K562 (cell line): ENCODE measurements at regions of chr11 and their contacts with region 1.

Region 1: DNA sequence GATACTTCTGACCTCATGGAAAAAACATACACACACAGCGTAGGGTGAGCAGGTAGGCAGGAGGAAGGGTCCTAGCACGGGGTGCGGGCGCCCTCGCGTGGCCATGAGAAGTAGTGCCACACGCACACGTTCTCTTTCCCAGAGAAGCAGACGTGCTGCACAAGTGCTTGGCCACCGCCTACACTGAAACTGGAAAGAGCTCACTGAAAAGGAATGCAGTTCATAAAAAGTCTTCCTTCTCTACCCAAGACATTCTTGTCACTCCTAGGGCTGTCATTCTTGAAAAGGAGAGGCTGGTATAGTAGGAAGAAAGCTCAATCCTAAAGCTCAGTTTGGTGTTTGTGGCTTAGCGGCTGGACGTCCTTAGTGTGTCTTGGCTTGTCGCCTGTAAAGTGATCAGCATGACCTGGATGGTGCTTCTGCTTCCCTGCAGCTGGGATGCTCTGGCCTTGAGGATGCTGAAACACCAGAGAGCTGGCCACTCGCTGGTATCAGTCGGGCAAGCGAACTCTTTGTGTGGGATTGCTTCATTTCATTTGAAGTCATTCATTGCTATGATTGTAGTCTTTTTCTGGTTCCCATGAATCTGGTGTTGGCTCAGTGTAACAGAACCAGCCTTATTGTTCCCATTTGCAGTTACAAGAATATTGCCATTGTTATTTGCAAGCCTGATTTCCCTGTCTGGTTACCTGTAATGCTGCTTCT is 303.8 kb downstream of the NTM start:
- DNase-seq: peak; percentile 63 to 79 (median 72)
- ATAC-seq: peak; percentile 97
- H3K4me3 ChIP-seq: no peak overlapping the region
- H3K27ac ChIP-seq: no peak overlapping the region
- H3K4me1 ChIP-seq: no peaks in the 10 kb centered on the region
- H3K27me3 ChIP-seq: no peaks in the 10 kb centered on the region
- CTCF ChIP-seq: peak; percentile 78 to 93 (median 82)
- EP300 ChIP-seq: no peak
- POLR2A ChIP-seq: no peak
- RAD21 ChIP-seq: peak; percentile 68 to 84

Region 2: DNA sequence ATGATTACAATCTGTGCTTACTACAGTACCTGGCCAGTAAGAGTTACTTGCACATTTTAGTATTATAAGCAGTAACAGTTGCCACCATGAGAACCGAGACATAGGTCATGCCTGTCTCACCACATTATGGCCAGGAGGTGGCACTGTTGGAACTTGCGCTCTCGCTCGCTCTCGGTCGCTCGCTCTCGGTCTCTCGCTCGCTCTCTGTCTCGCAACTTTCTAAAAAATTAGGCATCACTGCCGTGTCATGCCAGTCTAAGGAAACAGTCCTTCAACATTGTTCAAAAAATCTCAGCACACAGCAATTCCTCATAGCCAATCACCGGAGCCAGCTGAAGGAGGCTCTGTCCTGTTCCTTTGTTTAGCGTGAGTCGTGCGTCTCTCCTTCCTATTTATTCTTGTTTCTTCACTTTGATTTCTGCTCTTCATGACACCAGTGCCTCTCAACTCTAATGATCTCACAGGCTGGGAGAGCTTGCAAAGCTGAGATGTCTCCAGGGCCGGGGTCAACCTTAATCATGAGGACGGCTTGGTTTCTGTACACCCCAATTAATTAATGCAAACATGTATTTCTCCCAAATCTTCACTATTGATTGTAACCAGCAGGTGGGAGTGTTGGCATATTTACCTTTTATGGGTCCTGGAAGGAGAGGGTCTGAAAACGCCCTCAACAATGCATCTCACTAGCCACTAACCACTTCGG is 1239.5 kb before region 1 on chr11:
- CTCF ChIA-PET with region 1: no interaction called
- POLR2A ChIA-PET with region 1: no interaction called
- in situ Hi-C with region 1: no loop called
- intact Hi-C with region 1: loop called (anchors 5 kb)
- DNase-seq: peak; percentile 67 to 80 (median 74)
- ATAC-seq: peak; percentile 94
- H3K4me3 ChIP-seq: peak overlapping the region; percentile 36
- H3K27ac ChIP-seq: no peak overlapping the region
- H3K4me1 ChIP-seq: no peaks in the 10 kb centered on the region
- H3K27me3 ChIP-seq: peaks cover 7 to 17% of the 10 kb centered on the region in 2 experiments; a peak in 3 of 5 replicates
- CTCF ChIP-seq: peak; percentile 86 to 90 (median 86)
- EP300 ChIP-seq: no peak
- POLR2A ChIP-seq: no peak
- RAD21 ChIP-seq: peak; percentile 61 to 80

Region 3: GRCh38 chr11:131064373-131064991 is 609.7 kb before region 1 on chr11:
- CTCF ChIA-PET with region 1: no interaction called
- POLR2A ChIA-PET with region 1: no interaction called
- in situ Hi-C with region 1: no loop called
- intact Hi-C with region 1: loop called (anchors 1 kb)
- DNase-seq: peak; percentile 64 to 66 (median 66)
- ATAC-seq: peak; percentile 98
- H3K4me3 ChIP-seq: no peak overlapping the region
- H3K27ac ChIP-seq: no peak overlapping the region
- H3K4me1 ChIP-seq: no peaks in the 10 kb centered on the region
- H3K27me3 ChIP-seq: no peaks in the 10 kb centered on the region
- CTCF ChIP-seq: peak; percentile 72 to 81 (median 75)
- EP300 ChIP-seq: no peak
- POLR2A ChIP-seq: no peak
- RAD21 ChIP-seq: peak; percentile 48 to 78

Region 4: GRCh38 chr11:131246663-131247062 is 427.5 kb before region 1 on chr11:
- CTCF ChIA-PET with region 1: no interaction called
- POLR2A ChIA-PET with region 1: no interaction called
- in situ Hi-C with region 1: no loop called
- intact Hi-C with region 1: loop called (anchors 5 kb)
- DNase-seq: peak; percentile 20 to 45 (median 30)
- ATAC-seq: peak; percentile 91
- H3K4me3 ChIP-seq: no peak overlapping the region
- H3K27ac ChIP-seq: no peak overlapping the region
- H3K4me1 ChIP-seq: no peaks in the 10 kb centered on the region
- H3K27me3 ChIP-seq: no peaks in the 10 kb centered on the region
- CTCF ChIP-seq: peak; percentile 57 to 62 (median 60)
- EP300 ChIP-seq: no peak
- POLR2A ChIP-seq: no peak
- RAD21 ChIP-seq: peak in 1 of 2 experiments; percentile 38; a peak in 2 of 4 replicates

Region 5: GRCh38 chr11:131579932-131580387 is 94.2 kb before region 1 on chr11:
- CTCF ChIA-PET with region 1: interaction called, 3 read pairs
- POLR2A ChIA-PET with region 1: no interaction called
- in situ Hi-C with region 1: no loop called
- intact Hi-C with region 1: loop called (anchors 2 kb)
- DNase-seq: peak; percentile 21 to 44 (median 37)
- ATAC-seq: peak; percentile 91
- H3K4me3 ChIP-seq: no peak overlapping the region
- H3K27ac ChIP-seq: no peak overlapping the region
- H3K4me1 ChIP-seq: no peaks in the 10 kb centered on the region
- H3K27me3 ChIP-seq: peaks cover 2 to 4% of the 10 kb centered on the region in 2 experiments; a peak in 1 of 5 replicates
- CTCF ChIP-seq: peak; percentile 36 to 54 (median 48); a peak in 4 of 6 replicates
- EP300 ChIP-seq: no peak
- POLR2A ChIP-seq: no peak
- RAD21 ChIP-seq: peak in 1 of 2 experiments; percentile 19; a peak in 2 of 4 replicates

Region 6: DNA sequence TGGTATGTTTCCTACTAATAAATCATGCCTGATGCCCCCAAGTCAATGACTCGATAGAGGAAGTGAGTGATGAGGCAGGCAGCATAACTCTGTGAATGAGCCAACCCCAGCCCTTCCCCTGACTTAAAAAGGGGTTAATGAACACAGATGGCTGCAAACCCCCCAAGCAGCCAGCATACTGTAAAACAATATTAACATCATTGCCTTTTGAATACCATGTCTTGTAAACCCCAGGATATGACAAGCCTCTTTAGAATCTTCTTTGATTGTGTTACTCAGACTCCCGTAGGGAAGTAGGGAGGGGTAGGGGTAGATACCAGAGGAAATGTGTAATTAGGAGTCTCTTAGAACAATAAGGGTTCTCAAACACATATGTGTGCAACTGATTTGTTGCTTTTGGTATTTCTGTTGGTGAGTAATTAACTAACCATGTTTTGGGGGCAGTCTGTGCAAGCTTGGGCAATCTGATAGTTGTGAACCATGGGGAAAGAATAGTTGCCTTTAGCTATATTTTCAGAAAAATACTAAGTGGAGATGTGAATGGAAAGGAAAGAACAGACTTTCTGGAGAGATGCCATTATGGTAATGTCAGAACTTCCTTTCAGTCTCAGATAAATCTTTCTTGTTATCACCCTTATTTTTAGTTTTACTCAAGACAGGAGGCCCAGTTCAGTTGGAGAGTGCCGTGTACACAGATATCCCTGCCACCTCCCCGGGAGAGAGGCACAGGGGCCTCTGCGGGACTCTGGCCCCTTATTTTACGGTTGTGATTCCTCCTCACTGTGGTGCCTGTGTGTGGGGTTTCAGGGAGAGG is 398.0 kb after region 1 on chr11:
- CTCF ChIA-PET with region 1: no interaction called
- POLR2A ChIA-PET with region 1: no interaction called
- in situ Hi-C with region 1: no loop called
- intact Hi-C with region 1: no loop called
- DNase-seq: no peak
- ATAC-seq: no peak
- H3K4me3 ChIP-seq: no peak overlapping the region
- H3K27ac ChIP-seq: no peak overlapping the region
- H3K4me1 ChIP-seq: no peaks in the 10 kb centered on the region
- H3K27me3 ChIP-seq: no peaks in the 10 kb centered on the region
- CTCF ChIP-seq: no peak
- EP300 ChIP-seq: no peak
- POLR2A ChIP-seq: no peak
- RAD21 ChIP-seq: no peak